ENCODE measurements at regions of chr13 and their contacts with region 1.

Region 1: GRCh38 chr13:21149568-21149967 is 26.8 kb downstream of the SKA3 start:
- DNase-seq: no peak
- CTCF ChIP-seq: no peak

Region 2: GRCh38 chr13:20801707-20802106 is 347.9 kb before region 1 on chr13:
- CTCF ChIA-PET with region 1: no interaction called
- POLR2A ChIA-PET with region 1: no interaction called
- DNase-seq: no peak
- CTCF ChIP-seq: no peak

Region 3: GRCh38 chr13:21124852-21125251 is 24.7 kb before region 1 on chr13:
- CTCF ChIA-PET with region 1: no interaction called
- POLR2A ChIA-PET with region 1: no interaction called
- DNase-seq: no peak
- CTCF ChIP-seq: no peak

Region 4: DNA sequence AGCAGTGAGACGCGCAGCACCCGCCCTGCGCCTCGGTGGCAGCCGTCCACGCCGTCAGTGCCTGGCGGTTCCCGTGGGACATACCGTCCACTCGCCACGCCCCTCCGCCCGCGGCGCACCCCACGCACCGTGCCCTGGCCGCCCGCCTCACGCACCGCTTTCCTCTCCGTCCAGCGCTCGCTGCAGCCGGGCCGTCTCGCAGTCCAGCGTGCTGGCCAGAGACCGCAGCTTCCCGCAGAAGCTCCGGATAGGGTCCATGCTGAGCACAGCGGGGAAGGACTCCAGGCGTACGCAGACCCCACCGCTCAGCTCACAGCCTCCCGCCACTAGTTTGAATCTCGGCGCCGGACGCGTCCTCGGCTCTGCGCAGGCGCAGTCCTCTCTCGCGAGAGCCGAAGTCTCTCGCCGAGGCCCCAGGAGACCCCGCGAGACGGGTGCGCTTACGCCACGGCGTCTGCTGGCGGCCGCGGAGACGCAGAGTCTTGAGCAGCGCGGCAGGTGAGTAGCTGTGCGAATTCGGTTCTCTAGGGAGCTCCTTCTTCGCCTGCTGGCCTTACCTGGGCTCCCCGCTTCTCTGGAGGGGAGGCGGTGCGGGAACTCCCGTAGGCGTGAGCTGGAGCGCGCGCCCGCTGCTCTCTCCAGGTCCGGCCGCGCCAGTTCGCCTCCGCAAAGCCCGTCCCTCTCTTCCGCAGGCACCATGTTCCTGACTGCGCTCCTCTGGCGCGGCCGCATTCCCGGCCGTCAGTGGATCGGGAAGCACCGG is 26.8 kb after region 1 on chr13 and contains the starts of genes MRPL57 and SKA3:
- CTCF ChIA-PET with region 1: interaction called, 16 read pairs
- POLR2A ChIA-PET with region 1: interaction called, 10 read pairs
- DNase-seq: peak; percentile 98
- CTCF ChIP-seq: no peak

Region 5: GRCh38 chr13:21800837-21801616 is 651.5 kb after region 1 on chr13:
- CTCF ChIA-PET with region 1: no interaction called
- POLR2A ChIA-PET with region 1: no interaction called
- DNase-seq: no peak
- CTCF ChIP-seq: no peak